Dorsolateral prefrontal cortex (tissue), 120 donors: ENCODE measurements at regions of chrX and their contacts with region 1.

Region 1: DNA sequence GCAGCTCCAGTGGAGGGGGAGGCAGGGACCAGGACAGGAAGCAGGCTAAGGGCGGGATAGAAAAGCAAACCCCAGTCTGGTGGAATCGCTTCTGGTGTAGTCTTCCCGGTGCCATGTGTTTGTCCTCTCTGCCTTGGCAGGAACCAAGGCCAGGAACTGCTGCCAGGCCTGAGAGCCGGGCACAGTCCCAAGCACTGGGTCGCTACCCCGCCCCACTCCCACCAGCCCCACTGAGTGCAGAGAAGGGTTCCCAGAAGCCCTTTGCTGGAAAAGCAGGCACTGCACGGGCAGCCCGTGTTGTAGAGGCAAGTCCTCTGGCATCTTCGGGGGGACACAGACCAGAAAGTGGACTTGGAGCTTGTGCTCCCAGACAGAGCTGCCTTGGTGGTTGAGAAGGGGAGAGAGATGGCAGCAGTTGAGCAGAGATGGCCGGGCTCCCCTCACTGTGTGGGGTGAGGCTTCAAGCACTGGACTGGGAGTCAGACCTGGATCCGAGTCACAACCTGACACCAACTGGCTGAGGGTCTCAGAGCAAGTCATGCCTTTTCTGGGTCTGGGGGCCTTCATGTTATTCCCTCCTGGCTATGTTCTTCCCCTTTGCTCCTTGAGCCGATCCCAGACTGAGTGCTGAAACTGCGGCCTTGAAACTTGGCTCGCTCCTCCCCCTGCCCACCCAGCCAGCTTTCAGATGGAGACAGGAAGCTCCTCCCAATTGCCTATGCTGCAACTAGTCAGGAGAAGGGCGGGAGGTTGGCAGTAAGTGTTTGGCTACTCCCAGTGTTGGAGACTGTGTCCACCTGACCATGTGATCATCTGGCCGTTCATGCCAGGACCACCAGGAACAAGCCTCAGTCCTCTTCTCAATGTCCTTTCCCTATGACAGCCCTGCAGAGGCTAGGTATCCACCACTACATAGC is 59.7 kb upstream of the MTM1 start:
- DNase-seq: peak in 9 of 10 donors; percentile 39 to 75 (median 57)
- H3K4me3 ChIP-seq: peak overlapping the region in 8 of 59 donors; percentile 3 to 30 (median 16)
- H3K27ac ChIP-seq: peak overlapping the region in 53 of 59 donors; percentile 34 to 85 (median 69)
- H3K27me3 ChIP-seq: peaks cover 0 to 88% (median 15%) of the 10 kb centered on the region in 45 donors
- CTCF ChIP-seq: peak in 1 of 56 donors; percentile 22

Region 2: GRCh38 chrX:149962859-149963757 is 545.6 kb before region 1 on chrX:
- intact Hi-C with region 1: loop called in 1 of 2 experiments (anchors 5 kb)
- DNase-seq: peak; percentile 22 to 78 (median 56)
- H3K4me3 ChIP-seq: no peak overlapping the region
- H3K27ac ChIP-seq: peak overlapping the region in 2 of 59 donors; percentile 16 to 28
- H3K27me3 ChIP-seq: peaks cover 0 to 48% (median 3%) of the 10 kb centered on the region in 45 donors
- CTCF ChIP-seq: peak; percentile 25 to 81 (median 67)

Region 3: GRCh38 chrX:150291014-150291413 is 217.7 kb before region 1 on chrX:
- intact Hi-C with region 1: loop called in 1 of 2 experiments (anchors 10 kb)
- DNase-seq: peak; percentile 12 to 92 (median 84)
- H3K4me3 ChIP-seq: no peak overlapping the region
- H3K27ac ChIP-seq: peak overlapping the region in 26 of 59 donors; percentile 19 to 79 (median 38)
- H3K27me3 ChIP-seq: peaks cover 0 to 11% (median 0%) of the 10 kb centered on the region in 45 donors
- CTCF ChIP-seq: peak in 5 of 56 donors; percentile 14 to 29 (median 20)

Region 4: DNA sequence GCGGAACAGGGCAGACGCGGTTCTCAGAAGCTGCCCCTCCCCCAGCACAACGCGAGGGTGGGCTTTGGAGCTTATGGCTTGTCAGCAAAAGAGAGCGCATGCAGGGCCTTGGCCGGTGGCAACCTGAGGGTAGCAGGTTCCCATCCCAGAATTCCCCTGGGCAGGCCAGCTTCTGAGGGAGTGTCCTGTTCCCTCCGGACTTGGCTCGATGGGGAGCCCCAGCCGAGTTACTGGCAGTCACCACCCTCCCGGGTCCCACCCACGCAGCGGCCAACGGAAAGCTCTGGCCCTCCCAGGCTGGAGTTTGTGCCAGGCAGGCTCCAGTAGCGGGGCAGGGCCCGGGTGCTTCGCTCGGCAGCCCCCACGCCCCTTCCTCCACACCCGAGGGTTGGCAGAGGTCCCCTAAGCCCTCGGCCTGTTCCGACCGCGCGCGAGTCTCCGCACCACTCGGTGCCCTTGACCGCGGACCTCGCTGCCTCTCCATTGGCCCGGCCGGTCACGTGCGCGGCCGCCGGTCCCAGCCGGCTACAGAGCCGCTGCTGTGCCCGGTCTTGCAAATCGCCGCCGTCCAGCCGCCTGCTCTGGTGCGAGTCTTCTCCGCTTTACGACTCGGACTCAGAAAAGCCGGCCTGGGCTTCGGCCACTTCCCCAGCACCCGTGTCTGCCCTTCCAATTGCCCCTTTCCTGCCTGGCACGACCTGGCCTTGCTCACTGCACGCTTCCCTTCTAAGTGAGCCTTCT is 38.8 kb after region 1 on chrX:
- intact Hi-C with region 1: loop called in 1 of 2 experiments (anchors 5 kb)
- DNase-seq: peak; percentile 56 to 86 (median 66)
- H3K4me3 ChIP-seq: peak overlapping the region; percentile 13 to 62 (median 46)
- H3K27ac ChIP-seq: peak overlapping the region in 58 of 59 donors; percentile 29 to 93 (median 83)
- H3K27me3 ChIP-seq: peaks cover 0 to 58% (median 10%) of the 10 kb centered on the region in 45 donors
- CTCF ChIP-seq: peak in 1 of 56 donors; percentile 35

Region 5: DNA sequence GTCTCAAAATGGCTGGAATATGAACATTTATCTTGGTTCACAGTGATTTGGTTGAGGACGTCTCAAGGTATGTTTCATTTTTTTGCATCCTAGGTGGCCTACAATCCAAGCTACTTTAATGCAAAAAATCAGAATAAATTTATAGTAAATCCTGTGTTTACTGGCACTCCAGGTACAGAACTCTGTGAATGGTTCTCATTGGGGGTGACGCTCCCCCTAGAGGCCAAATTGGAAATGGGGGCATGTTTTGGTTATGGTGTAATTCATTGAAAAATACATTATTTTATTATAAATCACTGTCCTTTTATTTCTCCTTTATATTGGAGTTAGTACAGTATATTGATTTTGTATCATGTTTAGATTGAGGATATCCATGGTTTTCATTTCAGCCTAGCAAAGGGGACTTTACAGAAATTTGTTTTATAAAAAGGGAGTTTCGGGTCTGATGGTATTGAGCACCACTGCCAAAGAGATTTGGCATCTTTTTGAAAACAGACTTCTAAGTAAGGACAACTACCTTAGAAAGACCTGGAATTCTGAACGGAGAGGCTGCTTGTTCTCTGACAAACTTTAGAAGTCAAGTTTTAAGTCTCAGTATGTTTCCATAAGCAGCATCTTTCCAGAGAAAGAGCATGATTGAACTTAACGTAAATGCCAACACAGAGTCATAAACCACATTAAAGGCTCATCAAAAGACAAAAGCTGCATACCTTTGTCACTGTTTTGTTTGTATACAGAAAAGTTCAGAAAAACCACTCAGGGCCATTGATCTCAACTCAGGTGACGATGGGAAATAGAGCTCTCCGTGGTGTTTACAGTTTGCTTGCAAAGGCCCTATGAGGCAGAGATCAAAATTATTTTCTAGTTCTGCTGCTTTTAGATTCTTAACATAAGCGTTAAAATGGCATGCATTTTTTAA is 79.1 kb after region 1 on chrX:
- intact Hi-C with region 1: no loop called
- DNase-seq: peak in 3 of 10 donors; percentile 16 to 45 (median 29)
- H3K4me3 ChIP-seq: no peak overlapping the region
- H3K27ac ChIP-seq: no peak overlapping the region
- H3K27me3 ChIP-seq: peaks cover 0 to 32% (median 0%) of the 10 kb centered on the region in 45 donors
- CTCF ChIP-seq: peak; percentile 37 to 73 (median 60)

Region 6: DNA sequence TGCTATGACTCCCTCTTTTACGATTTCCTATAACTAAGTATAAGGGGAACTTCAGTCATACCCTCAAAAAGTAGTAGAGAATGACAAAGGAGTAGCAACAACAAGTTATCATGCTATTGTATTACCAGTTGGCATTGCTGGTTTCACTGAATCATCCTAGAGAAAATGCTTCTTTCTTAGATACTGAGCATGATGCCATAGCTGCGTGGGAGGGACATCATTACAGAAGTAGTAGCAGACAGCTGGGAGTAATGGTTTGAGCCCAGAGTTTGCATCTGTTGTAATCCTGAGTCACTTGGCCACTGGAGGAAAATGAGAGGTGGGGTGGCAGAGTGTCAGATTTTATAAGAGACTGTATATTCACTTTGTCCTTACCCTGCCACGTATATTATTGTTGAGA is 223.1 kb after region 1 on chrX:
- intact Hi-C with region 1: no loop called
- DNase-seq: peak in 3 of 10 donors; percentile 32 to 63 (median 51)
- H3K4me3 ChIP-seq: no peak overlapping the region
- H3K27ac ChIP-seq: no peak overlapping the region
- H3K27me3 ChIP-seq: peaks cover 0 to 49% (median 8%) of the 10 kb centered on the region in 45 donors
- CTCF ChIP-seq: no peak